Activated T-helper 2 cell treated with anti-CD3 and anti-CD28 coated beads, Interferon-gamma antibody, Interleukin-2, Interleukin-4, amounts not matched to agents 10 μg/mL and 5 μg/mL and 100 μg/mL, durations not matched to agents 14 hours and 24 hours and 36 hours (primary cell): ENCODE measurements at regions of chr4 and their contacts with region 1.

Region 1: GRCh38 chr4:147846318-147847155 is 114.6 kb downstream of the ARHGAP10 start:
- DNase-seq: no peak
- H3K4me3 Mint-ChIP-seq: no peak overlapping the region
- H3K27ac Mint-ChIP-seq: no peak overlapping the region
- H3K4me1 Mint-ChIP-seq: peaks cover 16% of the 10 kb centered on the region
- H3K27me3 Mint-ChIP-seq: no peaks in the 10 kb centered on the region

Region 2: GRCh38 chr4:147731580-147732517 is 114.7 kb before region 1 on chr4 and contains the start of gene ARHGAP10:
- intact Hi-C with region 1: loop called (anchors 5 kb)
- DNase-seq: peak; percentile 59
- H3K4me3 Mint-ChIP-seq: peak within 1 kb of the TSS; percentile 96
- H3K27ac Mint-ChIP-seq: peak within 1 kb of the TSS; percentile 91
- H3K4me1 Mint-ChIP-seq: peaks cover 44% of the 10 kb centered on the region
- H3K27me3 Mint-ChIP-seq: peaks cover 18% of the 10 kb centered on the region
- total RNA-seq, gene ARHGAP10: 18.5 TPM in 2 replicates

Region 3: DNA sequence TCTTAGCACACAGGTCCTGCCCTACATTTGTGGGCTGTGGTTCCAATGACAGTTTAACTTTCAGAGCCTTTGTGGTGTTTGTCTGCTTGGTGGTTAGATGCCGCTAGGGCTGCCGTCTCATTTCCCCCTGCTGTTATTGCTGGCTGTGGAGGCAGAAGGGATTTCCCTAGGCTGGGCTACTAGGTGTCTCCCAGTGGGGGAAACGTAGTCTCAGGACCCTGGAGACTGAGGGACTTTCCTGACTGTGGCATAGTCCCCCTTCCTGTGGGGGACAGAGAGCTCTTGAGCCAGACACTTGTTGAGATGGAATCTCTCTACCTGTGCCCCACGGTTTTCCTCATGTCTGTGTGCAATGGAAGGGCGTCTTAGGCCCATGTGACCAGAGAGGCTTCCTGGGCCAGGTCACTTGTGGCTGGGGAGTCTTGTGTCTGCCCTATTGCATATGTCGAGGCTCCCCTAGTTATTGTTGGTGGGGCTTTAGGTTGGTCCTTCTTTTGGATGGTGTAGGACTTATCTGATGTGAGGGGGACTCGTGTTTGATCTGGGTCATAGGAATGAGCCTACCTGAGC is 46.5 kb before region 1 on chr4:
- intact Hi-C with region 1: loop called (anchors 1 kb)
- DNase-seq: peak; percentile 70
- H3K4me3 Mint-ChIP-seq: peak overlapping the region; percentile 67
- H3K27ac Mint-ChIP-seq: peak overlapping the region; percentile 93
- H3K4me1 Mint-ChIP-seq: peaks cover 77% of the 10 kb centered on the region
- H3K27me3 Mint-ChIP-seq: no peaks in the 10 kb centered on the region